ENCODE measurements at regions of chr1 and their contacts with region 1.

Region 1: DNA sequence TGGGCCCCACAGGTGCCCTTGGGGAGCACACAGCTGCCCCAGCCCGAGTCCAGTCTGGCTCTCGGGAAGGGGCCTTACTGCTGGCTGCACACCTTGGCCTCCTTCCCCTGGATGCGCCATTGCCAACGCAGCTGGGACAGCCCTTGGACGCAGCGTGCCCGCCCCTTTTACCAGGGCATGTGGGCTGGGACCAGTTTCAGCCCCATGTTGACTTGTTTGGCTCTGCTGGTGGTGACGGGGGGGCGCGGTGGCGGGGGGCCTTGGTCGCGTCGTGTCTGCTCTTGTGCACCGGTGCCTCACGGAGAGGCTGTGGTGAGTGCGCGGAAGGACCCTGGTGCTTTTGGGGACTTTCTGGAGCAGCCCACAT is 19.6 kb downstream of the SKI start:
- DNase-seq: no peak
- H3K4me3 ChIP-seq: peak overlapping the region in 1 of 3 experiments; percentile 32
- H3K4me3 Mint-ChIP-seq: no peak overlapping the region
- H3K27ac ChIP-seq: no peak overlapping the region
- H3K27ac Mint-ChIP-seq: peak overlapping the region in 5 of 7 donors; percentile 10 to 99 (median 98)
- H3K4me1 ChIP-seq: peaks cover 33 to 40% of the 10 kb centered on the region in 2 donors
- H3K4me1 Mint-ChIP-seq: peaks cover 59% of the 10 kb centered on the region
- H3K27me3 ChIP-seq: no peaks in the 10 kb centered on the region
- H3K27me3 Mint-ChIP-seq: peaks cover 1 to 18% (median 1%) of the 10 kb centered on the region in 3 donors
- CTCF ChIP-seq: no peak

Region 2: DNA sequence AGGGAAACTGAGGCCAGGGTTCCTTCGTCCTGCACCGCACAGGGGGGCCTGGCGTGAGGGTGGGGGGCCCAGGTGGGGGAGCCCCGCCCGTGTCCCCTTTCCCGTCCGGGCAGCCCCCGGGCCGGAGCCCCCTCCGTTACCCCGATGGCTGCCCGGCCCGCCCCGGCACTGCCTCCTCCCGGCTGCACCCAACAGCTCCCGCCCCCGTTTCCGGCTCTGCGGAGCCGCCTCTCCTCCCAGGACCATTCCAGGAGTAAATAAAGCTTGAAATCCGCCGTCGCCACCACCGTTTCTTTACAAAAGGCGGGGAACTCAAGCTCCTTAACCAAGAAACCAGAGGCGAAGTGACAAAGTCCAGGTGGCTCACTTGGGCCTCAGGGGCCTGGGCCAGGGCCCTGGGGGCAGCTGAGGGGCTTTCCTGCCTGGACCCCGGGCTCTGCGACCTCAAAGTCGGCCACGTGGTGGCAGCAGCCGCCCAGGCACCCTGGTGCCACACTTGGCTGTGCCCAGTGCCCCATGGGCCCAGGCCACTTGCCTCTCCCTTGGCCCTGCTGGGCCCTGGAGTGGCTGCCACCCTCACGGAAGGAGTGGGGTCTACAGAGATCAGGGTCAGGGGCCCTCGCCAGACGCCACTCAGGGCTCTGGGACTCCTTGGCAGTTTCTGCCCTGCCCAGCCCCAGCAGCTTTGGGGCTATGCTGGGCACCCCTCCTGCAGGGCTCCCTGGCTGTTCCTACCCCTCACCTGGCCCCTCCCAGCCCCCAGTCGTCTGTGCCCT is 52.7 kb before region 1 on chr1:
- intact Hi-C with region 1: no loop called
- DNase-seq: peak; percentile 77 to 85 (median 84)
- H3K4me3 ChIP-seq: peak overlapping the region; percentile 54 to 92 (median 61)
- H3K4me3 Mint-ChIP-seq: peak overlapping the region; percentile 78 to 84
- H3K27ac ChIP-seq: peak overlapping the region; percentile 69 to 89
- H3K27ac Mint-ChIP-seq: peak overlapping the region; percentile 76 to 95 (median 90)
- H3K4me1 ChIP-seq: peaks cover 39 to 47% of the 10 kb centered on the region in 2 donors
- H3K4me1 Mint-ChIP-seq: peaks cover 28% of the 10 kb centered on the region
- H3K27me3 ChIP-seq: no peaks in the 10 kb centered on the region
- H3K27me3 Mint-ChIP-seq: peaks cover 0 to 3% (median 1%) of the 10 kb centered on the region in 3 donors
- CTCF ChIP-seq: peak; percentile 99

Region 3: DNA sequence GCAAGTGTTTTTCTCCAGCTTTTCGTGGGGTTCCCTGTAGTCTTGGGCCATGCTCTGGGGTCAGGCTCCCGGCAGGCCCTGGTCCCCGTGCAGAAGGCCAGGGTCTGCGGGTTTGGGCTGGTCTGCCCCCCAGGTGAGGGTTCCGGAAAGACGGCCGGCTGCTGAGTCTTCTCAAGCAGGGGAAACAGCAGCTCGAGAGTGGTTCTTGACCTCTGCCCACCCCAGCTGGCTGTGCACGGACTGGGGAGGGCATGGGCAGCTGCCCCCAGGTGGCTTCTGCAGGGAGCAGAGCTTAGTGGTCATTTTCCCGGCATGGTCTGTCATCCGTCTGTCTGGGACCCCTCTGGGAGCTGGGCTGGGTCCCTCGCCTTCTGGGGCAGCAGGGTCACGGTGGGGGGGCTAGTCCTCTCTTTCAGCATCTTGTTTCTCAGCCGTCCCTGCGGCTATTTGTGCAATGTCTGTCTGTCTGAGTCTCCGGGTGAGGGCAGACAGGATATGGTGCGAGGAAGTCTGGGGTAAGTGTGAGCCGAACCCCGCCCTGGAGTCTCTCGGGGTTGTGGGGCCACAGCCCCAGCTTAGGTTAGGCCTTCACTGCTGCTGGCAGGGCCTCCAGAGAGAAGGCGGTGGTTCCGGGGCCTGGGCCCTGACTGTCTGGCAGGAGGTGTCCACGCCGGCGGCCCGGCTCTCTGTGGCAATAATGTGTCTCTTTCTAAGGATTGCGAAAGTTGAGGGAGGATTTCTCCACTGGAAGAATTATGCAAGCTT is 13.6 kb before region 1 on chr1:
- intact Hi-C with region 1: loop called in 1 of 2 experiments (anchors 2 kb)
- DNase-seq: peak; percentile 97 to 99 (median 98)
- H3K4me3 ChIP-seq: peak overlapping the region in 2 of 3 experiments; percentile 22 to 80
- H3K4me3 Mint-ChIP-seq: peak overlapping the region; percentile 83 to 100
- H3K27ac ChIP-seq: peak overlapping the region; percentile 83 to 90
- H3K27ac Mint-ChIP-seq: peak overlapping the region; percentile 90 to 95 (median 94)
- H3K4me1 ChIP-seq: peaks cover 88 to 98% of the 10 kb centered on the region in 2 donors
- H3K4me1 Mint-ChIP-seq: peaks cover 85% of the 10 kb centered on the region
- H3K27me3 ChIP-seq: no peaks in the 10 kb centered on the region
- H3K27me3 Mint-ChIP-seq: peaks cover under 1 to 16% (median 2%) of the 10 kb centered on the region in 3 donors
- CTCF ChIP-seq: no peak

Measured in CD14-positive monocyte (primary cell).